Mammary epithelial cell (primary cell): ENCODE measurements at regions of chr13 and their contacts with region 1.

Region 1: DNA sequence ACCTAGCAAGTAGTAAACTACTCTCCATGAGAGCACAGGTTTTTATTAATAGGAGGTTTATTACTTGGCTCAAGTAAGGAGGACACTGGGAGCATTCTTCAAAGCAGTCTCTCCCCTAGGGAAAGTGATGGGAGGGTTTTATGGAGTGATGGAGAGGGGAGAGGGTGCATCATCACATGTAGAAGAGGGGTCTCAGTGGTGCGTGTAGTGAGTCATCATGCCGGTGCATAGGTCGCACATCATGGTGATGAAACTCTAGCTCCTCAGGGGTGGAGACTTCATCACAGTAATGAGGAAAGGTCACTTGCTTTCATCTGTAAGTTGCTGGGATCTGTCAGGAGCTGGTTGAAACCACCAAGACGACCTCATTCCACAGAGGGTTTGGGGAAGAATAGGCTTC is 210.8 kb upstream of the UBL3 start:
- DNase-seq: no peak
- H3K4me3 ChIP-seq: no peak overlapping the region
- H3K27ac ChIP-seq: no peak overlapping the region
- H3K4me1 ChIP-seq: no peaks in the 10 kb centered on the region
- H3K27me3 ChIP-seq: no peaks in the 10 kb centered on the region
- CTCF ChIP-seq: no peak

Region 2: GRCh38 chr13:30017880-30018279 is 43.3 kb before region 1 on chr13:
- CTCF ChIA-PET with region 1: no interaction called
- dilution Hi-C with region 1: no loop called
- in situ Hi-C with region 1: no loop called
- intact Hi-C with region 1: loop called (anchors 1 kb)
- DNase-seq: no peak
- H3K4me3 ChIP-seq: no peak overlapping the region
- H3K27ac ChIP-seq: no peak overlapping the region
- H3K4me1 ChIP-seq: peaks cover 5% of the 10 kb centered on the region
- H3K27me3 ChIP-seq: no peaks in the 10 kb centered on the region
- CTCF ChIP-seq: no peak